ENCODE measurements at regions of chr11 and their contacts with region 1.

Region 1: DNA sequence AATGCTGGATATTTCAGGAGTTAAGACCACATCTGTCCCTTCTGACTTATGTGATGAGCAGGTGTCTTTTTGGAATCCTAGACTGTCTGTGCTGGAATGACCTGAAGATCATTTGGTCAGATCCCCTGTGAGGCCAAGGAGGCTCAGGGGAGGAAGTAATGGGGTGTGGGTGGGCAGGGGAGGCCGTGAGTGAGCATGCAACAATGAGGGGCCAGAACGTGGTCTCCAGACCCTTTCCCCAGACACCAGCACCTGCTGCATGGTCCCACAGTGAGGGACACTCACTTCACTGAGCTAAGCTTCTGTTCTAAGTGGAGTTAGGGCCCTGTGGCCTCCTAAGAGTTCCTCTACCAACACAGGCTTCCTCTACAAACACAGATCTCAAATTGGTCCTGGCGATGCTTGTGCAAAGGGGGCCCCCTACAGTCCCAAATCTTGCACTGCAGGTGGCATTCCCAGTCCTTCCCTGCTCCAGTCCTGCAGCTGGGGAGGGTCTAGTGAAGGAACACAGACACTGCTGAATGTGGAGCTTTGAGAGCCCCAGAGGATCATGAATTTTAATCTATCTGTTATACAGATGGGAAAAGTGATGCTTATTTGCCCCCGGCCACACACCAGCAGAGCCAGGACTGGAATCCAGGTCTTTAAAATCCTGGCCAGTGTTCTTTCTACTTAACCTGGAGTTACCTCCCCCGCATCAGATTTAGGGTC is 7.4 kb downstream of the USP2 start:
- DNase-seq: peak; percentile 71 to 84
- ATAC-seq: peak in 2 of 4 donors; percentile 4 to 13
- H3K4me3 ChIP-seq: peak overlapping the region; percentile 84
- H3K27ac ChIP-seq: peak overlapping the region; percentile 97
- H3K4me1 ChIP-seq: peaks cover 77% of the 10 kb centered on the region
- H3K27me3 ChIP-seq: no peaks in the 10 kb centered on the region
- CTCF ChIP-seq: peak; percentile 90

Region 2: GRCh38 chr11:118715245-118715831 is 658.7 kb before region 1 on chr11:
- intact Hi-C with region 1: no loop called
- DNase-seq: no peak
- ATAC-seq: no peak
- H3K4me3 ChIP-seq: no peak overlapping the region
- H3K27ac ChIP-seq: no peak overlapping the region
- H3K4me1 ChIP-seq: no peaks in the 10 kb centered on the region
- H3K27me3 ChIP-seq: no peaks in the 10 kb centered on the region
- CTCF ChIP-seq: no peak

Region 3: DNA sequence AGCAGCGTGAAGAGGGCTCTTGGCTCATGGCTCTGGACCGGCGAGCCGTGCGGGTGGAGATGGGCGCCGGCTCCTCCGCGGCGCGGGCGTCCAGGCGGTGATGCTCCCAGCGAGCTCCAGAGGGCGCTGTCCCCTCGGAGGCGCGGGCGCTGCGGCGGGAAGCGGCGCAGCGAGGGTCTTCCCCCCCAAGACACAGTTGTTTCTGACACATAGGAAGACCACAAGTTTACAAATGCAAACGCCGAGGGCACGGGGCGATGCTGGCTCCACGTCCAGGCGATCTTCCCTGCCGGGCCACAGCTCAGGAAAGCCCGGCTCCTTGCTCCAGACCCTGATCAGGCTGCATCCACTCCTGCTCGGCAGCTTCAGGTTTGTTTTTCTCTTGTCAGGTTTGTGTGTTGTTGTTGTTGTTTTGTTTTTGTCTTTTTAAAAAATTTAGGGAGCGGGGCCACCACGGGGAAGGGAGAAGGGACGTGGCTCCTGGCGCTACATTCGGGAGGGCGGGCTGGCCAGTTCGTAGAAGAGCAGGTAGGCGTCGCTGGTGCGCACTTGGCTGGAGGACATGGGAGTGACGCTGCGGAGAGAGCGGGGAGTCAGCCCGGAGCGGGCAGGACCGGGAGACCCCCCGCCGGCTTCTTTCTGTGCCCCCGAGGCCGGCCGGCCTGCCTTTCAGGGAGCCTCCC is 17.6 kb before region 1 on chr11:
- intact Hi-C with region 1: loop called (anchors 2 kb)
- DNase-seq: peak; percentile 84 to 93
- ATAC-seq: peak; percentile 57 to 71 (median 62)
- H3K4me3 ChIP-seq: peak overlapping the region; percentile 61
- H3K27ac ChIP-seq: peak overlapping the region; percentile 74
- H3K4me1 ChIP-seq: peaks cover 31% of the 10 kb centered on the region
- H3K27me3 ChIP-seq: no peaks in the 10 kb centered on the region
- CTCF ChIP-seq: peak; percentile 79

Region 4: DNA sequence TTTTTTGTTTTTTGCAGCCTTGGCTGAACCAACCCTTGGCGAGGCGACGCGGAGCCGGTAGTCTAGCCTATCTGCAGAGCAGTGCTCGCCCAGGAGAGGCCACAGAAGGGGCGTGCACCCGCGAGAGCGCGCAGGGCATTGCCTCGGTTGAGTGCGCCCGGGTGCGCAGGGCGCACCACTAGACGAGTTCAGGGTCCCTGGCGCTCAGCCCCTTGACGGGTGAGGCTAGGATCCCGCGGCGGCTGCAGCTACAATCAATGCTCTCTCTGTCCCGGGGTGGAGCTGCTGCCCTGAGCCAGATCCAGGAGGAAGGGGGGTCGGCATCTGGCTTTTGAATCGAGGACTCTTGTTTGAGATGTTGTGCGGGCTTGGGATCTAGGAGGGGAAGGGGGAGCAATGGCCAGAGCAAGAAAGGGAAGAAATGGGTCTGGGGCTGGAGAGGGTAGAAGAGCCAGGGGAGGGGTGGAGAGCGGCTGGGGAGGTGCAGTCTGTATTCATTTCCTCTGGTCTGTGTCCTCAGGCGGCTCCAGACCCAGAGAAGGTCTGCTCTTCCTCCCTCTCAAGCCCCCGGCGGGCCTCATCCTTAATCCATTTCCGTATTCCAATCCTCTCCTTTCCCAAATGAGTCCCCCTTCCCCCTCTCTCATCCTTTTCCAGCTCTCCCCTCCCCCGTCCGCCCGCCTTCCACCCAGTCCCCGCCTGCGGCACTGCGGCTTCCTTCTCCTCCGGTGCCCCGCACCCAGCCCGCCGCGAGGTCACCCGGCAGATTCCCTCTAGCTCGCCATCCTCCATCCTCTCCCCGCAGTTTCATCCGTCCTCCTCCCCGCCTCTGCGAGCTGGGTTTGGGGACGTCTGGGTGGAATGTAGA is 48.1 kb after region 1 on chr11:
- intact Hi-C with region 1: no loop called
- DNase-seq: no peak
- ATAC-seq: no peak
- H3K4me3 ChIP-seq: peak overlapping the region; percentile 46
- H3K27ac ChIP-seq: no peak overlapping the region
- H3K4me1 ChIP-seq: peaks cover 7% of the 10 kb centered on the region
- H3K27me3 ChIP-seq: peaks cover 0 to 53% (median 16%) of the 10 kb centered on the region in 3 donors
- CTCF ChIP-seq: no peak